HEK293 (cell line): ENCODE measurements at regions of chr18 and their contacts with region 1.

Region 1: GRCh38 chr18:25896178-25896780 is 194.1 kb downstream of the SS18 start:
- H3K4me3 ChIP-seq: no peak overlapping the region
- H3K27ac ChIP-seq: no peak overlapping the region
- H3K4me1 ChIP-seq: no peaks in the 10 kb centered on the region
- CTCF ChIP-seq: peak; percentile 9; the same call in 1 of the 2 replicates

Region 2: DNA sequence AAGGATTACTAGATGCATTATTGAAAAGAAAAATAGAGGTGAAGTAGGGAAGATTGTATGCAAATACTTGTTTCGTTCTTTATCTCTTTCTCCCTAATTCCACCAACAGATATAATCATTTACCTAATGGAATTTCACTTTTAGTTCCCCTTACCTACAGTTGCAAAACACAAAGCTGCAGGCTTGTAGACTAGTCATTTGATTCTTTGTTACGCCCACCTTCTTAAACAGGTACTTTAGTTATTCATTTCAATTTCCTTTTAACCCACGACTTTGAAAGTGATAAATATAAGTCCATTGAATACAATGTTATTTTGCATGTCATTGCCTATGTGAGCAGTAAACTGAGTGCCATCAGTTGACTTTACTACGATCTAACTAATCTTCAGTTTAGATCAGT is 1439.7 kb before region 1 on chr18:
- CTCF ChIA-PET with region 1: interaction called, 11 read pairs
- POLR2A ChIA-PET with region 1: no interaction called
- H3K4me3 ChIP-seq: no peak overlapping the region
- H3K27ac ChIP-seq: no peak overlapping the region
- H3K4me1 ChIP-seq: no peaks in the 10 kb centered on the region
- CTCF ChIP-seq: no peak